IMR-90 (cell line): ENCODE measurements at regions of chrX and their contacts with region 1.

Region 1: DNA sequence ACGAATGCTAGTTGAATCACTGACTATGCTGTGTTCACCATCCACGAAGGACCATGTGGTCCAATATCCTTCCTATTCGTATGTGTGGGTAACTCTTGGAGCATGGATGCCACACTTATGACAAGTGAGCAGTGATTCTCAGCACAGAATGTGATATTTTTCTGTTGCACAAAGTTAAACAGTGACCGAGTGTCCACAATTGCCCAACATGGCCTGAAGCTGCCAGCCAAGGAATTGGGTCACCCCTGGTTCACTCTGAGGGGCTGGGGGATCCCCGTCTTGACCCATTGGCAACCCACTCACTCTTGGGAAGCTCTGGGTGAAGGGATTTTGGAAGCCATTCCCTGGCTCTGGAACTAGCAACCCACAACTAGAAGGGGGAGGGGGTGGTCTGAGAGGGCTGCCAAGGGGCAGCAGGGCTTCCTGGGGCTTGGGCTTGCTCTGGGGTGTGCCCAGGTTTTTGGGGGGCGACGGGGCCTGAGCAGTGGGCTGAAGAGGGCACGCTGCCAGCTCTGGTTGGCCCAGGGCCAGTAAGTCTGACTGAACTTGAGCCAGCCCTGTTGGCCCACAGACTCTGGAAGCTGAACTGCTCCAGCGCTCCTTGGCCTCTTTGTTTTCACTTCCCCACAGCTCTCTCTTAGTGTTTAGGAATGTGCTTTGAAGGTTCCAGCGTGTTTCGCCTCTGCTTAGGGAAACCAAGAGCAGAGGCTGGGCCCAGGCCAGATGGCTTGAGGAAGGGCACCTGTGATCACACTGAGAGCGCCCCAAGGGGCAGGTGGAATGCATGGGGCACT is 43.1 kb upstream of the BCOR start:
- DNase-seq: peak; percentile 47
- ATAC-seq: peak; percentile 87
- H3K4me3 ChIP-seq: no peak overlapping the region
- H3K27ac ChIP-seq: no peak overlapping the region
- H3K4me1 ChIP-seq: peaks cover 3% of the 10 kb centered on the region; the same call in 1 of the 2 replicates
- H3K27me3 ChIP-seq: peaks cover 17% of the 10 kb centered on the region
- CTCF ChIP-seq: no peak
- POLR2A ChIP-seq: no peak
- RAD21 ChIP-seq: no peak

Region 2: DNA sequence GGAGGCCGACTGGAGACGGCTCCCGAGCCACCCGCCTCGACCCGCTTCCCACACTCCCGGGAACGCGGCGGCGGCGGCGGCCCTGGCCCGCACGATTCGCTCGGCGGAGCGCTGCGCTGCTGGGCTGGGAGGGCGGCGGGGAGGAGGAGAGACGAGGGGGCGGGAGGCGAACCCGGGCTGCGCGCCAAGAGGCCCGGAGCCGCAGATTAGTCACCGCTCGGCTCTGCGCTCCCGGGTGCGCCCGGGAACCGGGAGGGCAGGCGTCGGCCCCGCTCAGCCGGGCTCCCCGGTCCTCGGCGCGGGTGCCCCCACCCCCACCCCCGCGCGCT is 32.0 kb before region 1 on chrX:
- CTCF ChIA-PET with region 1: no interaction called
- POLR2A ChIA-PET with region 1: no interaction called
- dilution Hi-C with region 1: no loop called
- in situ Hi-C with region 1: no loop called
- intact Hi-C with region 1: loop called (anchors 5 kb)
- DNase-seq: peak; percentile 76
- ATAC-seq: peak; percentile 65
- H3K4me3 ChIP-seq: peak overlapping the region; percentile 72
- H3K27ac ChIP-seq: peak overlapping the region; percentile 71
- H3K4me1 ChIP-seq: peaks cover 10% of the 10 kb centered on the region
- H3K27me3 ChIP-seq: peaks cover 3% of the 10 kb centered on the region; the same call in 1 of the 2 replicates
- CTCF ChIP-seq: no peak
- POLR2A ChIP-seq: no peak
- RAD21 ChIP-seq: no peak

Region 3: DNA sequence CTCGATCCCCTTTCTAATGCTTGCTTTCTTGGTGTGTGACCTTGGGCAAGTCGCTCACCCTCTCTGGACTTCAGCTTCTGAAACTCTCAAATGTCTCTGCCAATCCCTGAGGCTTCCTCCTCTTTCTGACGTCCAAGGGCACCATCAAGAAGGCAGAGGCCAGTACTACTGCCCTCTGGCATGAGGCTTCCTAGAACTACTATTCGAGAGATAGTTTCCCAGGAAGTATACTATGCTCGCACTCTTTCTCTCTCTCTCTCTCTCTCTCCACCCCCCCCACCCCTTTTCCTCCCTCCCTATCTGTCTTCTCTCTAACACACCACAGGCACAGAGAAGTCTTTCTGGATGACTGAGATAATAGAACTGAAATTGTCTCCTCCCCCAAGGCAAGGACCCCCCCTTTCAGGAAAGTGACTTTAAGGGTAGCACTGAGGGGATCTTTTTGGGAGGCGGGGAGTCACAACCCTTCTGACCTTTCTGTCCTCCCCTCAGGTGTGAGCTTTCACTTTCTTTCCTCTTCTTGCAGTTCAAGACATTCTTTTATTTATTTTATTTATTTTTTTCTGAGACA is 23.1 kb before region 1 on chrX:
- CTCF ChIA-PET with region 1: no interaction called
- POLR2A ChIA-PET with region 1: interaction called, 19 read pairs
- dilution Hi-C with region 1: no loop called
- in situ Hi-C with region 1: no loop called
- intact Hi-C with region 1: no loop called
- DNase-seq: no peak
- ATAC-seq: no peak
- H3K4me3 ChIP-seq: no peak overlapping the region
- H3K27ac ChIP-seq: no peak overlapping the region
- H3K4me1 ChIP-seq: no peaks in the 10 kb centered on the region
- H3K27me3 ChIP-seq: peaks cover 4% of the 10 kb centered on the region; the same call in 1 of the 2 replicates
- CTCF ChIP-seq: no peak
- POLR2A ChIP-seq: no peak
- RAD21 ChIP-seq: no peak